ENCODE measurements at regions of chr4 and their contacts with region 1.

Region 1: DNA sequence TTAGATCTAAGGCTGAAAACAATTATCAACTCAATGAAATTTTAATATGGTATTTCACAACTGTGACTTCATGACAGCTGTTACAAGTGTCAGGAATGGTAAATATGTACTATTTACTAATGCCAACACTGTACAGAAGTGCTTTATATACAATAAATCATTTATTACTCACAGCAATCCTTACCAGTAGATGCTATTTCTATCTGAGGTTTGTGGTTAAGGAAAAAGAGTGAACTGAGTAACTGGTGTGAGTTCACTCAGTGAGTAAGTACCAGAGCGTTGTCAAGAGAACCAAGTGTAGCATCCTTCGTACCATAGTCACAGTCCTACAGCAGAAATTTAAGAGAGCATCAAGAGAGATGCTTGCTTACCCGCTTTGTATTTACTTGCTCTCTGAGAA is 23.3 kb downstream of the MTHFD2L start:
- DNase-seq: no peak
- H3K4me3 ChIP-seq: no peak overlapping the region
- CTCF ChIP-seq: no peak

Region 2: DNA sequence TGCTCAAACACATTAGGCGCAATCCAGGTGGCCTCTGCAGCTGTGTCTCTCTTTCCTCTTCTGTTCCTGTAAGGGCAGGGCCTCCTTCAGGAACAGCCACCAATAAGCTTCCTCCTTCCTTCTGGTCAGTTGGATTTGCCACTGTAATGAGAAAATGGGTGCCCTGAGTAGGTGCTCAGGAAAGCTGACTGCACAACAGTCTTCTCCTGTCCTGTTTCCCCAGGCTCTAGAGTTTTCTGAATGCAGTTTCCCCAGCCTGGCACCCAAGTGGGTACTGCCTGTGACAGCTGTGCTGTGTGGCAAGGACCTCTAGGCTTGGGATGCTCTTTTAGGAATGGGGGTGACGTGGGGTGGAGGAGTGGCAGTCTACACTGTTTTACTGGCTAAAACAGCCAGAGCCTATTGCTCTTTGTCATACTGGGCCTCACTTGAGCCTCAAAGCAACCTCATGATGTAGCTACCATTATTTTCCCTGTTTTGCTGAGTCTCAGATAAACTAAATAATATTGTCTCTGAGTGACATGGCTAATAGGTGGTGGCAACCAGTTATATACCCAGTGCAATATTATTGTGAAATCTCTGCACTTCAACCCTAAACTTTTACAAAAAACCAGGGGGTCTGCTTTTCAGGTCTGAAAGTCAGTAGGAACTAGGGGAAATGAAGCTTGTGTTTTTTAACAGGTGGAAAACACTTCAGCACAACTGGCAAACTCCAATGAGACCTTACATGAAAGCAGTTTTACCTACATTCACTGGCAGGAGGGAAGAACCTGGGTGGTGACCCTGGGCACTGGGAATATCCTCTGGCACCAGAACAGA is 83.4 kb before region 1 on chr4:
- in situ Hi-C with region 1: no loop called
- DNase-seq: no peak
- H3K4me3 ChIP-seq: peak overlapping the region; percentile 59
- CTCF ChIP-seq: no peak

Region 3: GRCh38 chr4:74308215-74308614 is 127.0 kb after region 1 on chr4 and contains the start of gene EPGN:
- in situ Hi-C with region 1: loop called (anchors 5 kb)
- DNase-seq: no peak
- H3K4me3 ChIP-seq: no peak within 1 kb of the TSS
- CTCF ChIP-seq: no peak